ENCODE measurements at regions of chr10 and their contacts with region 1.

Region 1: DNA sequence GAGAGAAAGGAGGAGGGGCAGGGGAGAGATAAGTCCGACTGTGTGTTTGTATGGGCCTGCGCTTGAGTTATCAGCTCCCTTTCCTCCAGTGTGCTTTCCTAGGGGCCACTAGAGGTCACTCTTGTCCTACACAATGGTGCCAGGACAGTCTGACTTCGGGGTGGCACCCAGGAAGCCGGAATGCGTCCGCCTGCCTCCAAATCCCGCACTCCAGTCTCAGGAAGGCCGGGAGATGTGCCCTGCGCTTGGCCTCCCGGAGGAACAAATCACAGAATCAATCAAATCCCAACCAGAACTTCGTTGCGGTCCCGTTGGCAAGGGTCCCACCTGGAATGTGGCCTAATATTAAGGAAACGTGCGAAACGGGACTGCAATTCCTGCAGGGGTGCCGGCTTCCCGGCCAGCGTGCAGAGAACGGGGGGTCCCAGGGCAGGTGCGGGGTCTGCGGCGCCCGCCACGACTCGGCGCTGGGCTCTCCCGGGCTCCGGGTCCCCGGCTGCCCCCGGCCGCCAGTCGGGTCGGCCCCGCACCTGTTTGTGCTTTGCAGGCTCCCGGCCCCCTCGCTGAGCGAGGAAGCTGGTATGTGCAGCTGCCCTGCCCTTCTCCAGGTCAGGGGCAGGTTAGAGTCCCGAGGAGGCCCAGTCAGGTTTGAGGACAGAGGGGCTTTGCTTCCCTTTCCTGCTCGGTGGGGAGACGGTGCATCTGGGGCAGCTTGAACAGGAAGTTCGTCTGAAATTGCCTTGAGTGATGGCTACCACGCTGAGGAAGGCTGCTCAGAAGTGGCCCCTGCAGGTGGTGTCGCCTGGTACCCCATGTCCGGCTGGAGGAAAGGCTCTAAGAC is 21.0 kb upstream of the HPS1 start:
- DNase-seq: peak; percentile 89
- H3K4me3 ChIP-seq: peak overlapping the region; percentile 41 to 58 (median 47)
- H3K27ac ChIP-seq: peak overlapping the region in 3 of 4 donors; percentile 36 to 51 (median 48)
- H3K4me1 ChIP-seq: peaks cover 0 to 23% (median 12%) of the 10 kb centered on the region in 4 donors
- H3K27me3 ChIP-seq: no peaks in the 10 kb centered on the region
- CTCF ChIP-seq: peak; percentile 69 to 85 (median 82)
- EP300 ChIP-seq: no peak
- POLR2A ChIP-seq: no peak

Region 2: DNA sequence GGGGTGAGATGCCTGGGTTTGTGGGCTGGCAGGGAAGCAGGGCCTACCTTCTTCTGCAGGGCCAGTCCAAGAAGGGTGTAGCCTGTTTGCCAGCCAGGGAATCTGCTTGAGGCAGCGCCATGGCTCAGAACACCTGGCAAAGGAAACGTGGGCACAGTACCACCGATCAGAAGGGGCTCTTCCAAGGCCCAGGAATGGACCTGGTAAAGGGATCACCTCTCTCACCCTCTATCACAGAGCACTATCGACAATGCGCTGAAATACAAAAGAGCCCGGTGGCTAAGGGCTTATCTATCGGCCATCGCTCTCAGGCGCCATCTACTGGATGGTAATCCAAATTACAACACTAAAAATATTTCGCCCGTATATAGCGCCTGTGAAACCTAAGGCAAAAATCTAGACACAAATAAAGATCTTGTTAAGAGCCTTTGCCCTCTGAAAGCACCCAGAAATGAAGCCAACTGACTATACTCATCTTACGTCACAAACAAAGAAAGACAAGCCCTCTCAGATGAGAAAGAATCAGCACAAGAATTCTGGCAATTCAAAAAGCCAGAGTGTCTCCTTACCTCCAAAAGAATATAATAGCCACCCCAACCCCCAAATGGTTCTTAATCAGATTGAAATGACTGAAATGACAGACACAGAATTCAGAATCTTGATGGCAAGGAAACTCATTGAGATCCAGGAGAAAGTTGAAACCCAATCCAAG is 196.8 kb after region 1 on chr10:
- intact Hi-C with region 1: loop called (anchors 5 kb)
- DNase-seq: no peak
- H3K4me3 ChIP-seq: no peak overlapping the region
- H3K27ac ChIP-seq: no peak overlapping the region
- H3K4me1 ChIP-seq: peaks cover 0 to 10% (median 2%) of the 10 kb centered on the region in 4 donors
- H3K27me3 ChIP-seq: no peaks in the 10 kb centered on the region
- CTCF ChIP-seq: peak in 2 of 4 experiments; percentile 21 to 38
- EP300 ChIP-seq: no peak
- POLR2A ChIP-seq: no peak

Region 3: DNA sequence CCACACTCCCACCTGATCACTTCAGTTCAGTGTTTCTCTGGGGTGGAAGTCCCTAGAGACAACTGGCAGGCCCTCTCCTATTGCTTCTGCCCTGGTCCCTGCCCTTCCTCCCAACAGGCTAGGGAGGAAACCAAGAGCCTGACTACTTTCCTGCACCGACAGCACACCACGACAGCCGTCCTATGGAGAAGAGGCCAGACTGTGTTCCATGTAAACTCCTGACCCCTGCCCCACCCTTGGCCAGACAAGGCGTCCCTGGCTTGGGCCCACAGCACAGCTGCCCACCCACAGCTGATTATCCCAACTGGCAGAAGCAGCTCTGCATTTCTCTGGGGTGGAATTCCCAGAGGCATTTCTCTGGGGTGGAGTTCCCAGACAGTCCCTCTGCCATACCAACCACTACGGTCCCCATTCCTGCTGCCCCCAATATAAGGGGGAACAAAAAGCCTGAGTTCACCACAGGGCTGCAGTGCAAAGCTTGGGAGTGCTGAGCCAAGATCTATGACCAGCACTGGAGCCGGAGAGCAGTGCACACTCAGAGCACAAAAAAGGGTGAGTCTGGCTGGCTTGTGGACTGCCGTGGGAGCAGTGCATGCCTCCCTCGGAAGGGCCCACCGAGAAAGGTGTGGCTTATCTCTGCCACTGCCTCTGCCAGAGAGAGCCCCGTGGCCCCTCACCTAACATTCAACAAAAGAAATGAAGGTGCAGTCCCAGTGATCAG is 574.5 kb after region 1 on chr10:
- intact Hi-C with region 1: loop called (anchors 10 kb)
- DNase-seq: no peak
- H3K4me3 ChIP-seq: no peak overlapping the region
- H3K27ac ChIP-seq: no peak overlapping the region
- H3K4me1 ChIP-seq: no peaks in the 10 kb centered on the region
- H3K27me3 ChIP-seq: no peaks in the 10 kb centered on the region
- CTCF ChIP-seq: no peak
- EP300 ChIP-seq: no peak
- POLR2A ChIP-seq: no peak

Region 4: DNA sequence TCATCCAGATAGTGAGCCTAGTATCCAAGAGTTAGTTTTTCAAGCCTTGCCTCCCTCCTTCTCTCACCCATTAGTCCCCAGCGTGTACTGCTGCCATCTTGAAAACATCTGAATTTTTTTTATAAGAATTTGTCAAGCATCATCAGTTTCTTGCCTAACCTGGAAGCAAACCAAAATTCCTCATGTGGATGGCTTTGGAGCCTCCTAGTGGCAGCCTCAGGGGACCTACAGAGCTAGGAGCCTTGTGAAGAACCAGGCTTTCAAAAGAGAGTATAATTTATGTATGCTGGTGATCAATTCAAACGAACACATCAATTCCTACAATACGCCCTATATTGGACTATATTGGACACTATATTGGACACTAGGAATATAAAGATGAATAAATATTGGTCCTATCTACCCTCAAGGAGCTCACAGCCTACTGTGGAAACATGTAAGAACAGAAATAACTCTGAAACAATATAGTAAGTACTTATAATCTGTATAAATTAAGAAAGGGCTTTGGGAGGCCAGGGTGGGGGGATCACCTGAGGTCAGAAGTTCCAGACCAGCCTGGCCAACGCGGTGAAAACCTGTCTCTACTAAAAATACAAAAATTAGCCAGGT is 704.5 kb after region 1 on chr10:
- intact Hi-C with region 1: loop called (anchors 2 kb)
- DNase-seq: no peak
- H3K4me3 ChIP-seq: no peak overlapping the region
- H3K27ac ChIP-seq: no peak overlapping the region
- H3K4me1 ChIP-seq: no peaks in the 10 kb centered on the region
- H3K27me3 ChIP-seq: no peaks in the 10 kb centered on the region
- CTCF ChIP-seq: peak; percentile 14 to 57 (median 50)
- EP300 ChIP-seq: no peak
- POLR2A ChIP-seq: no peak

Region 5: DNA sequence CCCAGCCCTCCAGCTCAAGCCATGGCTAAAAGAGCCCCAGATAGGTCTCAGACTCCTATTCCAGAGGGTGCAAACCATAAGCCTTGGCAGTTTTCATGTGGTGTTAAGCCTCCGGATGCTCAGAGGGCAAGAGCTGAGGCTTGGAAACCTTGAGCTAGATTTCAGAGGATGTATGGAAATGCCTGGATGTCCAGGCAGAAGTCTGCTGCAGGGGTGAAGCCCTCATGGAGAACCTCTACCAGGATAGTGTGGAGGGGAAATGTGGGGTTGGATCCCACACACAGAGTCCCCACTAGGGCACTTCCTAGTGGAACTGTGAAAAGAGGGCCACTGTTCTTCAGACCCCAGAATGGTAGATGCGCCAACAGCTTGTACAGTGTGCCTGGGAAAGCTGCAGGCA is 781.1 kb after region 1 on chr10:
- intact Hi-C with region 1: loop called (anchors 2 kb)
- DNase-seq: no peak
- H3K4me3 ChIP-seq: no peak overlapping the region
- H3K27ac ChIP-seq: no peak overlapping the region
- H3K4me1 ChIP-seq: no peaks in the 10 kb centered on the region
- H3K27me3 ChIP-seq: no peaks in the 10 kb centered on the region
- CTCF ChIP-seq: no peak
- EP300 ChIP-seq: no peak
- POLR2A ChIP-seq: no peak

Measured in sigmoid colon (tissue), 7 donors.